ENCODE measurements at regions of chr2 and their contacts with region 1.

Region 1: DNA sequence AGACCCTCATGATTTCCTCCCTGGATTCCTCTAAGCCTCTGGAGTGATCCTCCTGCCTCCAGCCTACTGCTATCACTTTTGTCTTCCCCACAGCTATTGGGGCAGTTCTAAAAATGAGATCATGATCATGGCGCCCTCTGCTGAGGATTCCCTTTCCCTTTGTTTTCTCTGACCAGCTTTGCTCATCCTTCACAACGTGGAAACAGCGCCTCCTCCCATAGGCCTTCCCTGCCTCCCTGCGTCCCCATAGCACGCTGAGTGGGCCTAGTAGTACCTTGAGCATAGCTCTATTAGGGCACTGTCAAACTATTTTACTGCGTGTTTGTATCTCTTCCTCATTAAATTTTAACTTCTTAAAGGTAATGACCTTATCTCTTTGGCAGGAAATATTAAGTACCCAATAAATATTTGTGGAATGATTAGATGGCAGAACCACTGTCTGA is 207.0 kb upstream of the FANCL start:
- DNase-seq: peak; percentile 62
- ATAC-seq: peak; percentile 96
- H3K4me3 ChIP-seq: no peak overlapping the region
- H3K27ac ChIP-seq: no peak overlapping the region
- H3K4me1 ChIP-seq: no peaks in the 10 kb centered on the region
- H3K27me3 ChIP-seq: no peaks in the 10 kb centered on the region
- CTCF ChIP-seq: peak; percentile 70
- POLR2A ChIP-seq: no peak
- RAD21 ChIP-seq: peak; percentile 63

Region 2: GRCh38 chr2:58046585-58047372 is 401.3 kb before region 1 on chr2 and contains the start of gene VRK2:
- CTCF ChIA-PET with region 1: no interaction called
- POLR2A ChIA-PET with region 1: no interaction called
- dilution Hi-C with region 1: no loop called
- in situ Hi-C with region 1: no loop called
- intact Hi-C with region 1: loop called (anchors 10 kb)
- DNase-seq: peak; percentile 87
- ATAC-seq: peak; percentile 96
- H3K4me3 ChIP-seq: peak within 1 kb of the TSS; percentile 84
- H3K27ac ChIP-seq: peak within 1 kb of the TSS; percentile 86
- H3K4me1 ChIP-seq: peaks cover 2% of the 10 kb centered on the region; the same call in 1 of the 2 replicates
- H3K27me3 ChIP-seq: no peaks in the 10 kb centered on the region
- CTCF ChIP-seq: no peak
- POLR2A ChIP-seq: peak; percentile 56; the same call in 1 of the 2 replicates
- RAD21 ChIP-seq: peak; percentile 15; the same call in 1 of the 2 replicates
- total RNA-seq, gene VRK2: 22.8 and 27.2 TPM in 2 replicates

Region 3: GRCh38 chr2:58131191-58132011 is 316.7 kb before region 1 on chr2:
- CTCF ChIA-PET with region 1: interaction called, 3 read pairs
- POLR2A ChIA-PET with region 1: no interaction called
- dilution Hi-C with region 1: no loop called
- in situ Hi-C with region 1: loop called (anchors 25 kb)
- intact Hi-C with region 1: loop called (anchors 1 kb)
- DNase-seq: peak; percentile 63
- ATAC-seq: peak; percentile 52
- H3K4me3 ChIP-seq: no peak overlapping the region
- H3K27ac ChIP-seq: peak overlapping the region; percentile 28; the same call in 1 of the 2 replicates
- H3K4me1 ChIP-seq: peaks cover 6% of the 10 kb centered on the region
- H3K27me3 ChIP-seq: no peaks in the 10 kb centered on the region
- CTCF ChIP-seq: peak; percentile 37
- POLR2A ChIP-seq: no peak
- RAD21 ChIP-seq: peak; percentile 32; the same call in 1 of the 2 replicates

Region 4: DNA sequence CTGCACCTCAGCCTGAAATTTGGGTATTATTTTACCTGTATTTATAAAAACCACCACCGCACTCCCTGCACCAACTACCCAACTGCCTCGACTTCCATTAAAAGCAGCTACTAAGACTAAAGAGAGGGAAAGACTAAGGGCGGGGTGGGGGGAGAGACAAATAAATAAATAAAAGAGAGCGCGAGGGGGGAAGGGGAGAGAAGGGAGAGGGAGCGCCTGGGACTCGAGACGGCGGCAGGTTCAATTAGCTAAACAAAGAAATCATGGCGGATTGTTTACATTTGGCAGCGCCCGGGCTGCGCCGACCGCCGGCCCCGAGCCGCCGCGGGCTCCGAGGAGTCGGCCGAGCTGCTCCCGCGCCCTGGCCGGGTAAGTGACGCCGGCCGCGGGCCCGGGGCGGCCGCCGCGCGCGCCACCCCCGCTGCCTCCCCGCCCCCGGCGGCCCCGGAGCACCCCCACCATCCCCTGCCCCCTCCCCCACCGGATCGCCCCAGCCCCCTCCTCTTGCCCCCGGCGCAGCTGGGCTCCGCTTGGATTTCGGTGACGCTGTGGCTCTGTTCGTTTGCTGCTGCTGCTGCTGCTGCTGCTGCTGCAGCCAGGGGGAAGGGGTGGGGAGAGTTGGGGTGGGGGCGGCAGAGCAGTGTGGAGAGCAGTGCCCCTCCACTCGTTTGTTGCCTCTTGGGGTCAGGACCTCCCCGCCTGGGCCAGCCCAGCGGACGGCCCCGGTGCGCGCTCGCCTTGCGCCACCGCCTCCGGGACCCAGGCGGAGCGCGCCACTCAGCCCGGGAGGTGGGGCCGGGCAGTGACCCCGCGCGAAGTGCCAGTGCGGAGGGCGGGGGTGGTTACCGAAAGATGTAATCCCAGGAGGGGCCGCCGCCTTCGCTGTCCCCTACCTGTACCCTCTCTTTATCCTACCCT is 19.7 kb before region 1 on chr2:
- CTCF ChIA-PET with region 1: no interaction called
- POLR2A ChIA-PET with region 1: no interaction called
- dilution Hi-C with region 1: no loop called
- in situ Hi-C with region 1: no loop called
- intact Hi-C with region 1: no loop called
- DNase-seq: no peak
- ATAC-seq: peak; percentile 42
- H3K4me3 ChIP-seq: peak overlapping the region; percentile 0; the same call in 1 of the 2 replicates
- H3K27ac ChIP-seq: no peak overlapping the region
- H3K4me1 ChIP-seq: no peaks in the 10 kb centered on the region
- H3K27me3 ChIP-seq: peaks cover 7% of the 10 kb centered on the region
- CTCF ChIP-seq: no peak
- POLR2A ChIP-seq: no peak
- RAD21 ChIP-seq: no peak

Measured in IMR-90 (cell line).